ENCODE measurements at regions of chr5 and their contacts with region 1.

Region 1: DNA sequence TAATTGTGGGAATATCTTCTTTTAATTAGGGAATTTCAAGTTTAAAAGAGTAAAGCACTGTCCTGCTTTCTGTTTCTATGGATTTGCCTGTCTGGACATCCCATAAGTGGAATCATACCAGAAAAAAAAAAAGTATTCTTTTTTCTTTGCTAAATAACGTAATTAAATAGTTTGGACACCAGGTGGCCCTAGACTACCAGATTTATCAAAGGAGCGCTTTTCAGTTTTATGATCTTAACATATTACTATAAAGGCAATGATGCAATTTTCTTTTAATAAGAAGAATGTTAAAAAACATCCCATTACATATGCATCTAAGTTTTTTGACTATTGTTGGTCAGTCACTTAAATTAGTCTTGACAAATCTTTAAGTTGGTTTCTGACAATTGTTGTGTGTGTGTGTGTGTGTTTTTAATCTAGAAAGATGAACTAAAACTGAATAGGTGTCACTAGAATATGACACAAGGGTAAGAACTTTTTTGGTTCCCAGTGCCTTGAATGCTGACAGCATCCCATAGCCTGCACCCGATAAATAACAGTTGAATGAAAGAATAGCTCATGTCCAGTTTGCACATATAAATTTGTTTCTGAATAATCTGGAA is 49.5 kb downstream of the C5orf22 start:
- DNase-seq: peak; percentile 78
- H3K4me3 ChIP-seq: no peak overlapping the region
- H3K27ac ChIP-seq: no peak overlapping the region
- H3K4me1 ChIP-seq: no peaks in the 10 kb centered on the region
- H3K27me3 ChIP-seq: peaks cover 21% of the 10 kb centered on the region; the same call in 1 of the 2 replicates

Region 2: GRCh38 chr5:31809050-31809870 is 227.7 kb after region 1 on chr5:
- in situ Hi-C with region 1: loop called (anchors 10 kb)
- DNase-seq: peak; percentile 84
- H3K4me3 ChIP-seq: no peak overlapping the region
- H3K27ac ChIP-seq: no peak overlapping the region
- H3K4me1 ChIP-seq: peaks cover 9% of the 10 kb centered on the region
- H3K27me3 ChIP-seq: peaks cover 29% of the 10 kb centered on the region; the same call in 1 of the 2 replicates

Region 3: GRCh38 chr5:32076699-32077695 is 495.4 kb after region 1 on chr5:
- in situ Hi-C with region 1: loop called (anchors 10 kb)
- DNase-seq: peak; percentile 70
- H3K4me3 ChIP-seq: no peak overlapping the region
- H3K27ac ChIP-seq: no peak overlapping the region
- H3K4me1 ChIP-seq: no peaks in the 10 kb centered on the region
- H3K27me3 ChIP-seq: no peaks in the 10 kb centered on the region; the same call in none of the 2 replicates